CD4-positive, alpha-beta T cell (primary cell): ENCODE measurements at regions of chr16 and their contacts with region 1.

Region 1: DNA sequence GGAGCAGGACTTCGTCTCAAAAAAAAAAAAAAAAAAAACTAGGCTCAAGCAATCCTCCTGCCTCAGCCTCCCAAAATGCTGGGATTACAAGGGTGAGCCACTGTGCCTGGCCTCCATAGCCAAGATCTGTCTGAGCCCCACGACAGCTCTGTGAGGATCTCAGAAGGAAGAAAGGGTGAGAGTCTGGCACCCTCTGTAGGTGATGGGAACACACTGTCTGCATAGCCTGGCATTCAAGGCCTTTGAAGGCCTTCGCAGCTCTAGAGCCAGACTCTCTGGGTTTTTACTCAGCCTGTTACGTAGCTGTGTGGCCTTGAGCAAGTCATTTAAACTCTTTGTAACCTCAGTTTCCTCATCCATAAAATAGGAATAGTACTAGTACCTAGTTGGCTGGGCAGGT is 6.3 kb upstream of the XPO6 start:
- DNase-seq: peak; percentile 48 to 90 (median 60)
- ATAC-seq: peak; percentile 100
- H3K4me3 ChIP-seq: no peak overlapping the region
- H3K4me3 Mint-ChIP-seq: peak overlapping the region; percentile 51
- H3K27ac ChIP-seq: no peak overlapping the region
- H3K27ac Mint-ChIP-seq: peak overlapping the region; percentile 64
- H3K4me1 ChIP-seq: peaks cover 6% of the 10 kb centered on the region
- H3K4me1 Mint-ChIP-seq: peaks cover 6% of the 10 kb centered on the region
- H3K27me3 ChIP-seq: no peaks in the 10 kb centered on the region
- H3K27me3 Mint-ChIP-seq: no peaks in the 10 kb centered on the region
- CTCF ChIP-seq: peak; percentile 70

Region 2: DNA sequence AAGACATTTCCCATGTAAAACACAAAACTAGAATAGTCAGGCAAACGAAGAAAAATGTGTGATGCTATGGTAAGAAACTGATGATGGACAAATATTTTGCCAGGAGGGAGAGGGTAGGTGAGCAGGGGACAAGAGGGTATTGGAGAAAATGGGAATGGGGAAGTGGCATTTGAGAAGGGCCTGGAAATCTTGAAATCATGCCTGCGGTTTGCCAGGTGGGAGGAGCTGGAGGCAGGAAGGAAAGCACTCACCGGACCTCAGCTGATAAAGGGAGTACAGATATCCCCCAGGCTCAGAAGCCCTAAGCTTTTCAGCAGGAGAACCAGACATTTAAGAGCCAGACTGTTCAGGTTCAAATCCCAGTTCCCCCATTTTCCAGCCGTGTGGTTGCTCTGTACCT is 258.2 kb before region 1 on chr16:
- CTCF ChIA-PET with region 1: no interaction called
- POLR2A ChIA-PET with region 1: no interaction called
- intact Hi-C with region 1: loop called in 1 of 2 experiments (anchors 5 kb)
- DNase-seq: no peak
- ATAC-seq: no peak
- H3K4me3 ChIP-seq: no peak overlapping the region
- H3K4me3 Mint-ChIP-seq: no peak overlapping the region
- H3K27ac ChIP-seq: no peak overlapping the region
- H3K27ac Mint-ChIP-seq: no peak overlapping the region
- H3K4me1 ChIP-seq: no peaks in the 10 kb centered on the region
- H3K4me1 Mint-ChIP-seq: no peaks in the 10 kb centered on the region
- H3K27me3 ChIP-seq: peaks cover 6% of the 10 kb centered on the region in 2 experiments
- H3K27me3 Mint-ChIP-seq: peaks cover 25% of the 10 kb centered on the region
- CTCF ChIP-seq: no peak

Region 3: DNA sequence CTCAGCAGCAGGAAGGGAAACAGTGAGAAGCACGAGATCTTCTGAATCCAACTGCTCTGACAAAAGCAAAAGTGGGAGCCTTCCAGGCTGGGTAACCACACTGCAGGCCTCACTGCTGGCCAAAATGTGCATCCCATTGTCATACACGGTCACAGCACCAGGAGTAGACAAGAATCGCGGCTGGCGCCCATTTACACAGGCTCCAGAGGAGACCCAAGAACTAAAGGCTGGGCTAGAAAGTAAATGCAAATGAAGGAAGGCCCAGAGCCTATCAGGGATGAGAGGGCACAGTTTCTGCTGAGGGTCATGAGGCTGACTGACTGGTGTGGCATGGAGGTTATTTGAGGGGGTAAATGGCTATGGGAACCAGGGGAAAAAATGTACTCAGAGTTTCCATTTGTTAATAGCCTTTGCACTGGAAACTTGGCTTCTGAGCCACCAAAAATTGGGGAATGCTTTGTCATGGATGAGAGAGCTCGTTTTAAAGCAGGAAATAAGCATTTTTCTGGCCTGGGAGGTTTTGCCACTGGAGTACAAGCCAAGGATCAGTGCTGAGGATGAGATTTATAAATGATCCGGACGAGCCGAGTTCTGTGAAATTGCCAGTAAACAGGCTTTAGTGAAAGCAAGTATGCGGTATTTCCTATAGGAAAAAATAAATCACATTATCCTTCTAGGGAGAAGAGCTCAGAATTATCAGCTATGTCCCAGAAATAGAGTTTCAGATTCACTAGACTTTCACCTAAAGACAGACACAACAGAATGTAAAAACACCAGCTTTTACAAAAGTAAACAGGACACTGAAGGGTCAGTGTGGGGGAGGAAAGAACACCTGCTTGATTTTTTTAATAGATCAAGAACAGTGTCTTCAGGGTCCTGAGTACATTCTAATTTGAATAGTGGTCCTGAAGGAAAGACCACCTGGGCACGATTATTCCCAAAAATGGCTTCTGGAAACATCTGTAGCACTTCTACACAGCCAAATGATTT is 87.7 kb before region 1 on chr16:
- CTCF ChIA-PET with region 1: interaction called, 52 read pairs
- POLR2A ChIA-PET with region 1: interaction called, 38 read pairs
- intact Hi-C with region 1: no loop called
- DNase-seq: no peak
- ATAC-seq: no peak
- H3K4me3 ChIP-seq: no peak overlapping the region
- H3K4me3 Mint-ChIP-seq: no peak overlapping the region
- H3K27ac ChIP-seq: no peak overlapping the region
- H3K27ac Mint-ChIP-seq: peak overlapping the region; percentile 4
- H3K4me1 ChIP-seq: peaks cover 5% of the 10 kb centered on the region
- H3K4me1 Mint-ChIP-seq: peaks cover 17% of the 10 kb centered on the region
- H3K27me3 ChIP-seq: no peaks in the 10 kb centered on the region
- H3K27me3 Mint-ChIP-seq: no peaks in the 10 kb centered on the region
- CTCF ChIP-seq: no peak

Region 4: DNA sequence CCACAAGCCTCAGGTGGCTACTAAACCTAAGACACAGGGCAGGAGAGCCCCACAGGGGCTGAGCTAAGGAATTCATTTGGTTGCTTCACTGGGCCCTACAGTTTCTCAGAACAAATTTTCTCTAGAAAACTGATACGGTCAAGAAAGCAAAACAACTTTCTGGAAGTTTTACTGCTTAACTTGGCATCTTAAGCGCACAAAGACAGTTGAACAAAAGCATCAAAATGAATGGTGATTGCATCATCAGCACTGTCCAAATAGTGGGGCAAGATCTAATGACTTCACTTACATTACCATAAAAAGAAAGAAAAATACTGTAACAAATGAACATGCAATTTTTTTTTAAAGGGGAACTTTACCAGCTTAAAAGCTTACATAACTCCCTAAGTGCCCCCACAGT is 54.0 kb before region 1 on chr16:
- CTCF ChIA-PET with region 1: interaction called, 12 read pairs
- POLR2A ChIA-PET with region 1: interaction called, 4 read pairs
- intact Hi-C with region 1: no loop called
- DNase-seq: no peak
- ATAC-seq: no peak
- H3K4me3 ChIP-seq: no peak overlapping the region
- H3K4me3 Mint-ChIP-seq: peak overlapping the region; percentile 15
- H3K27ac ChIP-seq: peak overlapping the region in 1 of 2 donors; percentile 31
- H3K27ac Mint-ChIP-seq: peak overlapping the region; percentile 87
- H3K4me1 ChIP-seq: peaks cover 49% of the 10 kb centered on the region
- H3K4me1 Mint-ChIP-seq: peaks cover 95% of the 10 kb centered on the region
- H3K27me3 ChIP-seq: no peaks in the 10 kb centered on the region
- H3K27me3 Mint-ChIP-seq: no peaks in the 10 kb centered on the region
- CTCF ChIP-seq: no peak

Region 5: DNA sequence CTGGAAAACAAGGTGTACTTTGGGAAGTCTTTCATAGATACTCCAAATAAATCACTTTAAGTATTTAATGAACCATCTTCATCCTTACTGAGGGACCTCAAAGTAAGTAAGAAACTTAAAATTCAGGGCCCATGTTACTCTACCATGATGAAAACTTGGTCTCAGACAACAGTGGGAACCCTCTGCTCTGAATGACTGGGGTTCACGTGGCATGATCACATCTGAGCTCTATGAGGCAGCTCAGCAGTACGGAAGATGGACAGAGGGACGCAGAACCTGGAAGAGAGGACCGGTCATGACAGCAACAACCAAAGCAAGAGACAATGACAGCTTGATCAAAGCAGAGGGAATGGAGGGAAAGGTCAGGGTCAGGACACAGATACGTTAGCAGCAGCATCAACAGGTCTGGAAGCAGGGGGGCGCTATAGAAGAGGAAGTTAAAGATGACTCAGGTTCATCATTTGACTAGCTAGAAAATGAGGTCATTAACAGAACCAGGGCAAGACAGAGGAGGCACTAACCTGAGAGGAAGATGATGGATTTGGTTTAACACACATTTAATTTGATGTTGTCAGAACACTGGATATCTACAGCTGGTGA is 15.9 kb before region 1 on chr16:
- CTCF ChIA-PET with region 1: interaction called, 13 read pairs
- POLR2A ChIA-PET with region 1: interaction called, 3 read pairs
- intact Hi-C with region 1: no loop called
- DNase-seq: peak in 5 of 14 experiments; percentile 12 to 60 (median 51)
- ATAC-seq: peak; percentile 88
- H3K4me3 ChIP-seq: no peak overlapping the region
- H3K4me3 Mint-ChIP-seq: peak overlapping the region; percentile 62
- H3K27ac ChIP-seq: peak overlapping the region in 1 of 2 donors; percentile 51
- H3K27ac Mint-ChIP-seq: no peak overlapping the region
- H3K4me1 ChIP-seq: peaks cover 62% of the 10 kb centered on the region
- H3K4me1 Mint-ChIP-seq: peaks cover 33% of the 10 kb centered on the region
- H3K27me3 ChIP-seq: no peaks in the 10 kb centered on the region
- H3K27me3 Mint-ChIP-seq: no peaks in the 10 kb centered on the region
- CTCF ChIP-seq: peak; percentile 10